Dorsolateral prefrontal cortex (tissue), 120 donors: ENCODE measurements at regions of chr11 and their contacts with region 1.

Region 1: DNA sequence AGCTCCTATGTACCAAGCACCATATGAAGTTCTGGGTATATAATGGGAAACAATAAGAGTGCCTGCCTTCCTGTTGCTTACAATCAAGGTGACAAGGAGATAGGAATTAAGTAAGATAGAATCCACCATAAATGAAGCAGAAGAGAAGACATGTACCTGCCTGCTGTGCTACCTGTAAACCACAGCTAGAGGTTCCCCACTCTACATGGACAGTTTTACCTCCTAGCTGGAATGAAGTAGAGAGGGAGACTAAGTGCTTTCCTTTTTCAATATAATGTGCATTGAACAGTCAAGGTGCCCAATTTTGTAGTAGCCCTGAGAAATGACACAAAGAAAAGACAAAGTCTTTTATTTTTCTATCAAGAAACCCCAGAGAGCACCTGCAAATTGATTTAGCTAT is 984.6 kb downstream of the DLG2 start:
- DNase-seq: no peak
- H3K4me3 ChIP-seq: no peak overlapping the region
- H3K27ac ChIP-seq: no peak overlapping the region
- H3K27me3 ChIP-seq: no peaks in the 10 kb centered on the region
- CTCF ChIP-seq: no peak

Region 2: GRCh38 chr11:84588131-84588829 is 54.2 kb before region 1 on chr11:
- intact Hi-C with region 1: loop called in 1 of 2 experiments (anchors 5 kb)
- DNase-seq: no peak
- H3K4me3 ChIP-seq: no peak overlapping the region
- H3K27ac ChIP-seq: no peak overlapping the region
- H3K27me3 ChIP-seq: no peaks in the 10 kb centered on the region
- CTCF ChIP-seq: no peak